H1 (cell line): ENCODE measurements at regions of chr6 and their contacts with region 1.

Region 1: GRCh38 chr6:163554663-163555062 is 140.1 kb downstream of the QKI start:
- DNase-seq: peak in 1 of 2 experiments; percentile 76
- H3K4me3 ChIP-seq: no peak overlapping the region
- H3K27ac ChIP-seq: no peak overlapping the region
- H3K4me1 ChIP-seq: no peaks in the 10 kb centered on the region
- H3K27me3 ChIP-seq: no peaks in the 10 kb centered on the region
- CTCF ChIP-seq: peak; percentile 28 to 74 (median 57); a peak in 3 of 4 replicates
- EP300 ChIP-seq: no peak
- POLR2A ChIP-seq: no peak
- RAD21 ChIP-seq: peak; percentile 80 to 84

Region 2: GRCh38 chr6:163137398-163137881 is 417.2 kb before region 1 on chr6:
- CTCF ChIA-PET with region 1: no interaction called
- POLR2A ChIA-PET with region 1: no interaction called
- DNase-seq: no peak
- H3K4me3 ChIP-seq: no peak overlapping the region
- H3K27ac ChIP-seq: no peak overlapping the region
- H3K4me1 ChIP-seq: no peaks in the 10 kb centered on the region; a peak in 1 of 7 replicates
- H3K27me3 ChIP-seq: no peaks in the 10 kb centered on the region
- CTCF ChIP-seq: no peak
- EP300 ChIP-seq: no peak
- POLR2A ChIP-seq: no peak
- RAD21 ChIP-seq: no peak

Region 3: GRCh38 chr6:163427498-163428254 is 127.0 kb before region 1 on chr6:
- CTCF ChIA-PET with region 1: interaction called, 33 read pairs
- POLR2A ChIA-PET with region 1: interaction called, 4 read pairs
- DNase-seq: no peak
- H3K4me3 ChIP-seq: no peak overlapping the region
- H3K27ac ChIP-seq: no peak overlapping the region
- H3K4me1 ChIP-seq: peaks cover 0 to 8% (median 3%) of the 10 kb centered on the region in 4 experiments; a peak in 4 of 7 replicates
- H3K27me3 ChIP-seq: no peaks in the 10 kb centered on the region
- CTCF ChIP-seq: peak in 1 of 3 experiments; percentile 6; a peak in 2 of 4 replicates
- EP300 ChIP-seq: no peak
- POLR2A ChIP-seq: no peak
- RAD21 ChIP-seq: peak; percentile 60 to 68

Region 4: DNA sequence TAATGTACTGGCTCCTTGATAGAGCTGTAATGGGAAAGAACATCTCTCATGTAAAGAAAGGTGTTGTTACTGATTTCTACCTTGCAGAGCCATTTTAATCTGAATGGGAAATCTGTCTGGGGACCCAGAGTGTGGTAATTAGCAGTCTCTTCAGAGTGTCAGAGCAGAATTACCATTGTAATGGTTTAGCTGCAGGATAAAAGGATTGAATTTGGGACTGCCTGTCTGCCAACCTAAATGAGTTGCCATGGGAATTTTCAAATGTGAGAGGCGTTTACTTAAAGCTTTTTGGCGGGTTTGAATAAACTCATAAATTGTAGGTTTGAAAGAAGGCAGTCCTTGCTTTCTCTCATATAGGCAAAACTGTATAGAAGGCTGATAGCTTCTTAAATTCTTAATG is 11.3 kb before region 1 on chr6:
- CTCF ChIA-PET with region 1: interaction called, 12 read pairs
- POLR2A ChIA-PET with region 1: interaction called, 3 read pairs
- DNase-seq: no peak
- H3K4me3 ChIP-seq: peak overlapping the region in 1 of 4 experiments; percentile 44; a peak in 1 of 8 replicates
- H3K27ac ChIP-seq: no peak overlapping the region
- H3K4me1 ChIP-seq: peaks cover 2 to 21% (median 10%) of the 10 kb centered on the region in 4 experiments; a peak in 5 of 7 replicates
- H3K27me3 ChIP-seq: no peaks in the 10 kb centered on the region
- CTCF ChIP-seq: no peak
- EP300 ChIP-seq: no peak
- POLR2A ChIP-seq: no peak
- RAD21 ChIP-seq: no peak